Caki2 (cell line): ENCODE measurements at regions of chr12 and their contacts with region 1.

Region 1: DNA sequence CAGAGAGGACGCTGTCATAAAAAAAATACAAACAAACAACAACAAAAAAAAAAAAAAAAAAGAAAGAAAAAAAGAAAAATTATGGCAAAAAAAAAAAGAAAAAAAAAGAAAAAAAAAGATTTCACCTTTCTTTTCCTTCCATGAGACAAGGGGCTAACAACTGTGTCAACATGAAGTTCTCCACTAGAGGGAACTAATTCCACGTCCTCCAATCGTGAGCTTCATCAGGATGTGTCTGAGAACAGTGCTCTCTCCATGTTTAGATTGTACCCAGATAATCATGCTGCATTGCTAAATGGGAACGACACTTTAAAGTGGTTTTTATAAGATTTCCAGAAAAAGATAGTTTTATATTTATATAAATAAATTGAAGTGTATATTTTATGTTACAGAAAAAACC is 96.2 kb upstream of the PTPRB start:
- DNase-seq: peak; percentile 81

Region 2: DNA sequence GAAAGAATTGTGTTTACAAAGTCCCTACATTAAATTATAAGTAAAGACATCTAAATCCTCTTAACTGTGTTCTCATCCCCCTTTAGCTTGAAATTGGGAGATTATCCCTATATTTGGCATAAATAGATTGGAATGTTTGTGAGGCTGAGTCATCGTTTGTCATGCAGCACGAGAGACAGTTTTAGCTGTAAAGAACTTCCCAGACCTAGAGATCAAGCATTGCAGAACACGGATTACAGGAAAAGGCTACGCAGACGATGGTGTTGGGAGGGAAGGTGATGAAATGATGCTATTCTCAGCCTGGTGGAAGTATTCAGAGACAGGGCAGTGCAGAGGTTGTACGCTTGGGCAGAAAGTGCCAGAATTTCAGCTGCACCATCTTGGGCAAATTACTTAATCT is 189.9 kb before region 1 on chr12:
- in situ Hi-C with region 1: no loop called
- DNase-seq: peak; percentile 64

Region 3: GRCh38 chr12:70784042-70784668 is 50.8 kb after region 1 on chr12:
- in situ Hi-C with region 1: no loop called
- DNase-seq: no peak

Region 4: DNA sequence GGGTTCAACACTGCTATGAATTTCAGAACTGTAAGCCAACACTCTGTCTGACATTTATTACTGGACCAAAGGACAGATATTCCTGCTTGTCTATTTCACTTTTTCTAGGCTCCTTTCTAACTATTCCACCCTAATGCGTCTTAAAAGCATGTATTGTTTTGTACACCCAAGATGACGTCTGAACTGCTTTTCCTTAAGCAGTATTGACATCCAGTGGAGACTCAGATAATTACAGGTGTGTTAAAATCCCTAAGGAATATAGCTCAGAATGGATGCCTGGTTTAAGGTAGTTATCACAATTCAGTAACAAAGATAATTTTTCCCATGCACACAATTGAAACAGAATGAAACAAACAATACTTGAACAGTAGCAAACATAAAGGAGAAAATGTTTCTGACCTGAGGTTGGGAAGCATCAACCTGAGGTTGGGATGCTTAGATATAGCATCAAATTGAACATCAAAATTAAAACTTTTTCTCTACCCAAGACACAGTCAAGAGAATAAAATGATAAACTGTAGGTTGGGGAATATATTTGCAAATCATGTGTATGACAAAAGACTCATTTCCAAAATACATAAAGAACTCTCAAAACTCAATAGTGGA is 280.9 kb after region 1 on chr12:
- in situ Hi-C with region 1: loop called (anchors 25 kb)
- DNase-seq: peak; percentile 67